ENCODE measurements at regions of chr20 and their contacts with region 1.

Region 1: DNA sequence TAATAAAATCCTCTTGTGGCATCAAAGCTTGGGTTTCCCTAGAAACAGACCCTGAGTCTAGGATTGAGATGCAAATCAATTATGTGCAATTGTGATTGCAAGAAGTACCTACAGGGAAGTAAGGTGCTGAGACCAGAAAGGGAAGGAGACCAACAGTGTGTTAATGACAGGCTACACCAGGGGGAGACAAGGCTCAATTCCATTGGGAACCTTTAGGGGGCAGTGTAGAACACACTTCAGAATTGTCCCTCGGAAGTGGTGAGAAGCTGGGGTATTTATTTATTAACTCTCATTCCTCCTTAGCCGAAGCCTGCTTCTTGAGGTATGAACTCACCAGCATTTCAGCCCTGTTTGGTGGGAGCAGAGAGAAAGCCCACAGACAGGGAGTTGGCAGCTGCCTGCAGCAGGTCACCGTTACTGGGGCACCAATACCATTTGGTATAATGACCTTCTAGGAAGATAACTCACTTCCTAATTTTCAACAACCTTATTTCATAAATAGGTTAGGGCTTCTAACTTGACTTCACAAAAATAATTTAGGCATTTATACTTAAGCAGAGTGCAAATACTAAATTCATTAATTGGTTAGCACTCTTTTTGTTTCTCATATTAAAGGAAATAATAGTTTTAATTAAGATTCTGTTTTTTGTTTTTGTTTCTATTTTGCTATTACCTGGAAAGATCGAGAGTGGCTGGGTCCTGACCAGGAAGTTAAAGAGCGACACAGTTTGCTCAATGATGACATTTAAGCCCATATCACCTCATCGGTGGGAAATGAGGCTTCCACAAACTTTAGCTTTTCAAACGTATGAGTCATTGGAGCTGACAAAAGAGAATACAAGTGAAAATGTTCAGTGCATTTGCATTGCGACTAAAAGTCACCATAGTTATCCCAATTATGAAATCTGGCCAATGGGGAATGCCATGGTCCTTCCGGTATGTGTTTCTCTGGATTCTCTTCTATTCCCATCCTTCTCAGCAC is 94.8 kb downstream of the BTBD3 start:
- DNase-seq: peak; percentile 72
- H3K4me3 ChIP-seq: no peak overlapping the region
- H3K27ac ChIP-seq: no peak overlapping the region
- H3K4me1 ChIP-seq: no peaks in the 10 kb centered on the region
- H3K27me3 ChIP-seq: no peaks in the 10 kb centered on the region
- CTCF ChIP-seq: peak; percentile 95

Region 2: DNA sequence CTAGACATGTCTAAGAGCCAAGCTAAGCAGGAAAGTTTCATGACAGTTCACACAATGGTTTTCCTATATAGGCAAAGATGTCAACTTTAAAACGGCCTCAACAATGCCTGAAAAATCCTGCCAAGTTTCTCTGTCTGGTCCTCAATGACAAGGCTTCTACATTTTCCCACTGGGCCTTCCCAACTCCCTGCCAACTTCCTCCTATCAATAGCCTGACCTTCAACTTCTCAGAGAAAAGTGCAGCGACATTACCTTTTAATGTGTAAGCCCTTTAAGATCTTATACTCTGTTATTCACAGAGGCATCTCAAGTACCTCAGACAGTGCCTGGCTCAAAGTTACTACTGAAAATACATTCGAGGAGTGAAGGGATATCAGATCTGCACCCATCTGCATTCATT is 151.1 kb before region 1 on chr20:
- CTCF ChIA-PET with region 1: no interaction called
- POLR2A ChIA-PET with region 1: no interaction called
- intact Hi-C with region 1: no loop called
- DNase-seq: no peak
- H3K4me3 ChIP-seq: no peak overlapping the region
- H3K27ac ChIP-seq: no peak overlapping the region
- H3K4me1 ChIP-seq: no peaks in the 10 kb centered on the region
- H3K27me3 ChIP-seq: no peaks in the 10 kb centered on the region
- CTCF ChIP-seq: no peak

Region 3: GRCh38 chr20:12058216-12058615 is 45.7 kb after region 1 on chr20:
- CTCF ChIA-PET with region 1: no interaction called
- POLR2A ChIA-PET with region 1: no interaction called
- intact Hi-C with region 1: no loop called
- DNase-seq: peak; percentile 5
- H3K4me3 ChIP-seq: no peak overlapping the region
- H3K27ac ChIP-seq: no peak overlapping the region
- H3K4me1 ChIP-seq: peaks cover 11% of the 10 kb centered on the region
- H3K27me3 ChIP-seq: no peaks in the 10 kb centered on the region
- CTCF ChIP-seq: no peak

Region 4: GRCh38 chr20:12358006-12358656 is 345.6 kb after region 1 on chr20:
- CTCF ChIA-PET with region 1: interaction called, 10 read pairs
- POLR2A ChIA-PET with region 1: no interaction called
- intact Hi-C with region 1: no loop called
- DNase-seq: peak; percentile 12
- H3K4me3 ChIP-seq: no peak overlapping the region
- H3K27ac ChIP-seq: no peak overlapping the region
- H3K4me1 ChIP-seq: no peaks in the 10 kb centered on the region
- H3K27me3 ChIP-seq: no peaks in the 10 kb centered on the region
- CTCF ChIP-seq: peak; percentile 38; the same call in 1 of the 2 replicates

Region 5: DNA sequence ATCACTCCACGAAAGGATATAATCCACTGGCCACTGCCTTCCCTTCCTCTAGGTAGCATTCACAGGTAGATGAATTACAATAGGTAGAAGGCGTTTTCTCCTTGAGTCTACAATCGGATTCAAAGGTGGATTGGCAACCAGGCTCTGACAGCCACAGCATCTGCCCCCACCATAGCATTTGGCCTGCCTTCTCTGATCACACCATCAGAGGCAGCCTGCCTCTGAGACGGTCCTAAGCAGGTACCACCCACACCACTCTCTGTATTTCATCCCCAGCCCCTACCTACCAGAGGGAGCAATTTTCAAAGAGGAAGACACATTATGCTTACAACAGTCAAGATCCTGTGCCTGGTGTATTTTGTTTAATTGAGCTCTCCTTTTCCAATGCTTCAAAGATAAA is 785.8 kb after region 1 on chr20:
- CTCF ChIA-PET with region 1: no interaction called
- POLR2A ChIA-PET with region 1: no interaction called
- intact Hi-C with region 1: no loop called
- DNase-seq: no peak
- H3K4me3 ChIP-seq: no peak overlapping the region
- H3K27ac ChIP-seq: no peak overlapping the region
- H3K4me1 ChIP-seq: no peaks in the 10 kb centered on the region
- H3K27me3 ChIP-seq: no peaks in the 10 kb centered on the region
- CTCF ChIP-seq: no peak